ENCODE measurements at regions of chr2 and their contacts with region 1.

Region 1: GRCh38 chr2:190990132-190990531 is 23.8 kb downstream of the STAT1 start:
- DNase-seq: no peak
- ATAC-seq: peak in 2 of 4 donors; percentile 28 to 46
- H3K4me3 ChIP-seq: no peak overlapping the region
- H3K27ac ChIP-seq: no peak overlapping the region
- H3K4me1 ChIP-seq: no peaks in the 10 kb centered on the region
- H3K27me3 ChIP-seq: no peaks in the 10 kb centered on the region
- CTCF ChIP-seq: no peak

Region 2: DNA sequence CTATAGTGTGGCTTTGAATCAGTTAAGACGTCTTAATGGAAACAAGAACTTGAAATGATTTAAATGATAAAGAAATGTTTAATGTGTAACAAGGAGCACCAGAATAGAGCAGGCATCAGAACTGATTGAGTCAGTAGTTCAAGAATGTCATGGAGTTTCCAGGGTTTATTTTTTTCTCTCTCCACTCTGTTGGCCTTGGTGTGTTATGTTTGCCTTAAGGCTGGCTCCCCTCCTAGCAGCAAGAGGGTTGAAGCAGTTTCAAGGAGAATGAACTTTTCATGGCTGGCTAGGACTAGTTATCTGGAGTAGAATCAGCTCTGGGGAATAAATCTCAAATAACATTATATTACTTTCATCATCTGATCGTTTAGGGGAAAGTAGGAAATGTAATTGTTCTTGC is 122.9 kb before region 1 on chr2:
- intact Hi-C with region 1: no loop called
- DNase-seq: no peak
- ATAC-seq: no peak
- H3K4me3 ChIP-seq: no peak overlapping the region
- H3K27ac ChIP-seq: no peak overlapping the region
- H3K4me1 ChIP-seq: peaks cover 11% of the 10 kb centered on the region
- H3K27me3 ChIP-seq: no peaks in the 10 kb centered on the region
- CTCF ChIP-seq: no peak

Region 3: DNA sequence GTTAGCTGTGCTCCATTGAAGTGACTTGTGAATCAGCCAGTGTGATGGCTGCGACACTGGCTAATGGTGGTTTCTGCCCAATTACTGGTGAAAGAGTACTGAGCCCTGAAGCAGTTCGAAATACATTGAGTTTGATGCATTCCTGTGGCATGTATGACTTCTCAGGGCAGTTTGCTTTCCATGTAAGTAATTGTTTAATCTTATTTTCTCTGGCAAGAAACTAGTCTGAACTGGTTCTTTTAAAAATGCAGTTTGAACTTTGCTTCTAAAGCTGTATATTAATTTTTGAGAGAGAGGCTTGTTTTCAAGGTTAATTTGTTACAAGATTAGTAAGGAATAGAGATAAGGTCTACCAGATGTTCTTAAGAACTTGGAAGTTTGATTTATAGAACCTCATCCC is 62.8 kb before region 1 on chr2:
- intact Hi-C with region 1: loop called in 1 of 2 experiments (anchors 5 kb)
- DNase-seq: no peak
- ATAC-seq: no peak
- H3K4me3 ChIP-seq: no peak overlapping the region
- H3K27ac ChIP-seq: no peak overlapping the region
- H3K4me1 ChIP-seq: no peaks in the 10 kb centered on the region
- H3K27me3 ChIP-seq: no peaks in the 10 kb centered on the region
- CTCF ChIP-seq: no peak

Measured in psoas muscle (tissue), 8 donors.